ENCODE measurements at regions of chr6 and their contacts with region 1.

Region 1: GRCh38 chr6:14693301-14694192 is 552.3 kb upstream of the JARID2 start:
- DNase-seq: no peak
- ATAC-seq: no peak
- H3K4me3 ChIP-seq: no peak overlapping the region
- H3K27ac ChIP-seq: no peak overlapping the region
- H3K4me1 ChIP-seq: peaks cover 0 to 6% (median 0%) of the 10 kb centered on the region in 9 donors
- H3K27me3 ChIP-seq: no peaks in the 10 kb centered on the region
- CTCF ChIP-seq: no peak

Region 2: DNA sequence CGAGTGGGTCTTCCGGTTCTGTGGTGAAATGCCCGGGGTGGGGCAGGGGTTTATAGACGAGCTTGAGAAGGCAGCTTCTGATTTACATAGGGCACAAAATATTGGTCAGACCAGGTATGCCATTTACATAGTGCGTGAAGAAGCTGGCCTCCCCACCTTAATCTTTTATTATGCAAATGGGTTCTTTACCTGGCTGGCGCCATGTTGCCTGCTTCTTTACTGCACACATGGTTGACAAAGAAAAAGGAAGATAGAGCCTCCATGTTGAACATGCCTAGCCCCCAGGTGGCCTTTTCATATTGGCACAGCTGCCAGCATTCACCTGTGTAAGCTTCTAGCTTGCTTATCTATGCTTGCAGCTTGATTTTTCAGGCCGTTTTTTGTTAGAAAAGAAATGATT is 1700.8 kb before region 1 on chr6:
- intact Hi-C with region 1: no loop called
- DNase-seq: no peak
- ATAC-seq: no peak
- H3K4me3 ChIP-seq: no peak overlapping the region
- H3K27ac ChIP-seq: peak overlapping the region in 2 of 10 donors; percentile 15 to 66
- H3K4me1 ChIP-seq: peaks cover 0 to 13% (median 5%) of the 10 kb centered on the region in 9 donors
- H3K27me3 ChIP-seq: no peaks in the 10 kb centered on the region
- CTCF ChIP-seq: no peak

Region 3: DNA sequence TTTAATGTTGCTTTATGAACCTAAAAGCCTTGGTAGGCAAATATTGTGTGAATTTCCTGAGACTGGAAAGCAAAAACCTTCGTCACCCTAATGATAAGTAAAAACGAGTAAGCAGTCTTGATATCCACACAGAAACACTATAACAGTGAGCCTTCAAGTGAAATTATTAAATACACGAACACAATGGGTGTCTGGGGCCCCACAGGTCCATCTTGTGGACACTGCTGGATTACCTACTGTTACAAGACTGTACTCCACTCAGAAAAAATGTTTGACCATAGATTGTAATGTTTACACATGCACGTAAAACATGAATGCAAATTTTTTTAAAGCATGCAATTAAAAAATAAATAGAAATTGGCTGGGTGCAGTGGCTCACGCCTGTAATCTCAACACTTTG is 109.1 kb before region 1 on chr6:
- intact Hi-C with region 1: no loop called
- DNase-seq: no peak
- ATAC-seq: peak in 2 of 8 donors; percentile 49 to 71
- H3K4me3 ChIP-seq: no peak overlapping the region
- H3K27ac ChIP-seq: no peak overlapping the region
- H3K4me1 ChIP-seq: peaks cover 0 to 14% (median 3%) of the 10 kb centered on the region in 9 donors
- H3K27me3 ChIP-seq: no peaks in the 10 kb centered on the region
- CTCF ChIP-seq: peak in 7 of 9 donors; percentile 11 to 49 (median 32)

Region 4: DNA sequence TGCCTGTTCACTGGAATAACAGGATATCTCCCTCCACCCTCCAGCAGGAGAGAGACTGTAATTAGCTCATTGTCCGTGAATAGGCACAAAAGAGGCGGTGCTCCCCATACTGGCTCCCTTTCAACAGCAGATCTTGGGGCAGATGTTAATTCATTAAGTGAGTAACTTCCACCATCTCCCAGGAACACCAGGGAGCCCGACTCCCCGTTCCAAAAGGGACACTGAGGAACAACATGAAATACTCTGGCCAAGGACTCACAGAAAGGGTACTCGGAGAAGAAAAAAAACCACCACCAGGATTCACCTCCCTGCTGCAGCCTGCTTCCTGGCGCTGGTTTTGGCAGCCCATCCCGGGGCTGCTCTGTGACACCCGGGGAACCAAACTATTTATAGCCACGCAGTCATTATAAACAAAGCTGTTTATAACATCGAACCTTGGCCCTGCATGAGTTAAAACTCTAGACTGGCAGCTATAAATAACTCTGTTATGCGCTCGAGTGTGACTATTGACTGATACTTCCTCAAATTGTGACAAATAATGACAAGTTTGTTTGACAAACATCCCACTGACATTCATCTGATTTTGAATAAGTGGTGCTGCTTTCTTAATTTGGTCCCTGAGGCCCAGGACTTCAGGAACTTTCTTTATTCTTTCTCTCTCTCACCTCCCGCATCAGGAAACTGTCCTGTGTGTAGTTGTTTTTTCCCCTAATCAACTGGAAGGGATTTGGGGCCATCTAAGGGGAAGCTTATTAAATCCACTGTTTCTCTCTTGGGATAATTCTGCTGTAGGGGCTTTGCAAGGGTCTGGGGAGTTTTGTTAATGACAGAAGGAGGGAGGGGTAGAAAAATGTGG is 54.4 kb before region 1 on chr6:
- intact Hi-C with region 1: loop called in 1 of 10 experiments (anchors 2 kb)
- DNase-seq: peak; percentile 67 to 79
- ATAC-seq: peak; percentile 91 to 96 (median 94)
- H3K4me3 ChIP-seq: peak overlapping the region in 9 of 10 donors; percentile 7 to 45 (median 35)
- H3K27ac ChIP-seq: peak overlapping the region; percentile 48 to 90 (median 79)
- H3K4me1 ChIP-seq: peaks cover 0 to 67% (median 35%) of the 10 kb centered on the region in 9 donors
- H3K27me3 ChIP-seq: no peaks in the 10 kb centered on the region
- CTCF ChIP-seq: peak in 5 of 9 donors; percentile 8 to 30 (median 20)

Region 5: DNA sequence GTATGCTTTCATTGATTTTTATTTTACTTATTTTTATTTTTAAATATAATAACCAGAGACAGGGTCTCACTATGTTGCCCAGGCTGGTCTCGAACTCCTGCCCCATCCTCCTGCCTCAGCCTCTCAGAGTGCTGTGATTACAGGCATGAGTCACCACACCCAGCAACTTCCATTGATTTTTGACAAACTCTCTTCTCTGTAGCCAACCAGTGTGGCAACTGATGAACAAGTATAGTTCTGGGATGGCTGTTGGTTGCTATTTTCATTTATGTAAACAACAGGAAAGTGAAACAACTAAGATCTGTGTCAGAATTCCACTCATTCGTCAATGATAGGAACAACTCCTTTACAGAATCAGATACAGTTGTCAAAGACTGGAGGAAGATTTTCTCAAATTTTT is 195.6 kb after region 1 on chr6:
- intact Hi-C with region 1: no loop called
- DNase-seq: no peak
- ATAC-seq: peak in 1 of 8 donors; percentile 8
- H3K4me3 ChIP-seq: no peak overlapping the region
- H3K27ac ChIP-seq: peak overlapping the region in 7 of 10 donors; percentile 37 to 77 (median 65)
- H3K4me1 ChIP-seq: peaks cover 0 to 25% (median 17%) of the 10 kb centered on the region in 9 donors
- H3K27me3 ChIP-seq: no peaks in the 10 kb centered on the region
- CTCF ChIP-seq: no peak